Naive thymus-derived CD4-positive, alpha-beta T cell (primary cell): ENCODE measurements at regions of chr3 and their contacts with region 1.

Region 1: GRCh38 chr3:122679085-122679881 is 1.4 kb upstream of the PARP14 start:
- DNase-seq: peak; percentile 49 to 84 (median 79)
- ATAC-seq: peak; percentile 82
- H3K4me3 ChIP-seq: peak overlapping the region; percentile 87
- H3K4me3 Mint-ChIP-seq: peak overlapping the region; percentile 87 to 99 (median 94)
- H3K27ac ChIP-seq: peak overlapping the region; percentile 98
- H3K27ac Mint-ChIP-seq: peak overlapping the region; percentile 93 to 100 (median 98)
- H3K4me1 ChIP-seq: peaks cover 27 to 33% of the 10 kb centered on the region in 2 donors
- H3K4me1 Mint-ChIP-seq: peaks cover 40 to 57% (median 54%) of the 10 kb centered on the region in 7 donors
- H3K27me3 ChIP-seq: no peaks in the 10 kb centered on the region
- H3K27me3 Mint-ChIP-seq: no peaks in the 10 kb centered on the region

Region 2: DNA sequence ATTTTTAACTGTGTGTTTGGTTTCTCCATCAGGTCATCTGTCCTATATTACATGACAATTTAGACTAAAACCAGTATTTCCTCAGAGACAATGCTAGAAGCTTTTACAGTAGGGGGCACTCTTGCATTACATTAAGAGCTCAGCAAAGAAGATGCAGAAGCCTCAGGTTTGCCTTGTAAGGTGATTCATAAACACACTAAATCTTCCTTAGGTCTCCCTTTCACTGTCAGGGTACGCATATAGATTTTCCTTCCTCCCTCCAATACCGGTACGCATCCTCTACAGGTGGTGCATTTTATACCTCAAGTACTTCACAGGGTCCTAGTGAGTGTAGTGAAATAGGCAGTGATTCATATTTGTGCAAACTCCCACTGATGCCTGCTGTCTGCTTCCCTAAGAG is 577.6 kb before region 1 on chr3:
- CTCF ChIA-PET with region 1: no interaction called
- POLR2A ChIA-PET with region 1: no interaction called
- intact Hi-C with region 1: loop called (anchors 1 to 5 kb)
- DNase-seq: peak in 7 of 9 donors; percentile 19 to 66 (median 54)
- ATAC-seq: peak; percentile 79
- H3K4me3 ChIP-seq: no peak overlapping the region
- H3K4me3 Mint-ChIP-seq: peak overlapping the region in 1 of 10 donors; percentile 4
- H3K27ac ChIP-seq: no peak overlapping the region
- H3K27ac Mint-ChIP-seq: no peak overlapping the region
- H3K4me1 ChIP-seq: peaks cover 0 to 5% of the 10 kb centered on the region in 2 donors
- H3K4me1 Mint-ChIP-seq: peaks cover 0 to 37% (median 10%) of the 10 kb centered on the region in 7 donors
- H3K27me3 ChIP-seq: no peaks in the 10 kb centered on the region
- H3K27me3 Mint-ChIP-seq: no peaks in the 10 kb centered on the region

Region 3: DNA sequence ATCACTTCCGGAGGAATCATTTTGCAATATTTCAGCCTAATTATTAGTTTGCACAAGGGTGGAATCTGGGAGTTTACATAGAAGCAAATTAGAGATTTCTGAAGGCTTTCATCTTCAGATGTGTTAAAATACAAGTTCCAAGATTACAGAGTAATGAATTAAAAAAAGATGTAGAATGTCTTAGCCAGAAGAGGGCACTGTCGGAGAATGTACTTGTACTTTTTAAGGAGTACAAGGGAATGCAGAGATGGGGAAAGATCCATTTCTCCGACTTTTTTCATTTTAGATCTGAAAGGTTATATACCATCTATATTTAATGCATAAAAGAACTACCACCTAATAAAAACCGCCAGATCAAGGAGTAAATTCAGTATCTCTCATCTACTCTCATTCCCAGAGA is 220.3 kb before region 1 on chr3:
- CTCF ChIA-PET with region 1: interaction called, 3 read pairs
- POLR2A ChIA-PET with region 1: no interaction called
- intact Hi-C with region 1: loop called (anchors 1 kb)
- DNase-seq: no peak
- ATAC-seq: no peak
- H3K4me3 ChIP-seq: no peak overlapping the region
- H3K4me3 Mint-ChIP-seq: no peak overlapping the region
- H3K27ac ChIP-seq: no peak overlapping the region
- H3K27ac Mint-ChIP-seq: peak overlapping the region in 5 of 9 donors; percentile 6 to 60 (median 25)
- H3K4me1 ChIP-seq: no peaks in the 10 kb centered on the region
- H3K4me1 Mint-ChIP-seq: peaks cover 0 to 9% (median 0%) of the 10 kb centered on the region in 7 donors
- H3K27me3 ChIP-seq: no peaks in the 10 kb centered on the region
- H3K27me3 Mint-ChIP-seq: no peaks in the 10 kb centered on the region

Region 4: DNA sequence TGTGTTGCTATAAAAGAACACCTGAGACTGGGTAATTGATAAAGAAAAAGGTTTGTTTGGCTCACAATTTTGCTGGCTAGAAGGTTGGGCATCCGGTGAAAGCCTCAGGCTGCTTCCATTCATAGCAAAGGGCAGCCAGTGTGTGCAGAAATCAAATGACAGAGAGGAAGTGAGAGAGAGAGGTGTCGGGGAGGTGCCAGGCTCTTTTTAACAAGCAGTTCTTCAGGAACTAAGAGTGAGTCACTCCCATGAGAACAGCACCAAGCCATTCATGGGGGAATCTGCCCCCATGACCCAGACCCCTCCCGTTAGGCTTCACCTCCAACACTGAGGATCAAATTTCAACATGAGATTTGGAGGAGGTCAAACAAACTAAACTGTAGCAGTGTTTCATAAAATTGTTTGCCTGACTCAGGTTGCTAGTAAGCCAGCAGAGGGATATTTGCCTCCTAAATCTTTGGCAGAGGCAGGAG is 106.3 kb before region 1 on chr3:
- CTCF ChIA-PET with region 1: interaction called, 7 read pairs
- POLR2A ChIA-PET with region 1: interaction called, 84 read pairs
- intact Hi-C with region 1: loop called (anchors 1 kb)
- DNase-seq: no peak
- ATAC-seq: peak; percentile 73
- H3K4me3 ChIP-seq: no peak overlapping the region
- H3K4me3 Mint-ChIP-seq: peak overlapping the region in 5 of 10 donors; percentile 10 to 68 (median 40)
- H3K27ac ChIP-seq: no peak overlapping the region
- H3K27ac Mint-ChIP-seq: peak overlapping the region; percentile 29 to 84 (median 67)
- H3K4me1 ChIP-seq: peaks cover 23 to 24% of the 10 kb centered on the region in 2 donors
- H3K4me1 Mint-ChIP-seq: peaks cover 30 to 74% (median 70%) of the 10 kb centered on the region in 7 donors
- H3K27me3 ChIP-seq: no peaks in the 10 kb centered on the region
- H3K27me3 Mint-ChIP-seq: no peaks in the 10 kb centered on the region

Region 5: DNA sequence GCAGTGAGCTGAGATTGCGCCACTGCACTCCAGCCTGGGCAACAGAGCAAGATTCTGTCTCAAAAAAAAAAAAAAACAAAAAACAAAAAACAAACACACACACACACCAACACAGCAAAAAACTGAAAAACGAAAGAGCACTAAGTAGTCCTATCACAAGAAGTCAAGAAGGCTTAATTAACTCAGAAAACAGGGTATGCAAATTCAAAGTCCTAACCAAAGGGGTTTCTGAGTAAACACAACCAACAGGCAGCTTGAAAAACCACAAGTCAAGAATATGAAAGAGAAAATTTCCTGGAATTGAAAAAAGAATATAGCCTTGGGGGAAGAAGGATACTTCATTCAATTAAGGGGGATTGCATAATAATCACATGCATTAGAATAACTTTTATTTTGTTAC is 36.3 kb before region 1 on chr3:
- CTCF ChIA-PET with region 1: interaction called, 7 read pairs
- POLR2A ChIA-PET with region 1: interaction called, 14 read pairs
- intact Hi-C with region 1: loop called (anchors 1 kb)
- DNase-seq: no peak
- ATAC-seq: no peak
- H3K4me3 ChIP-seq: no peak overlapping the region
- H3K4me3 Mint-ChIP-seq: peak overlapping the region in 1 of 10 donors; percentile 68
- H3K27ac ChIP-seq: no peak overlapping the region
- H3K27ac Mint-ChIP-seq: peak overlapping the region in 2 of 9 donors; percentile 23 to 65
- H3K4me1 ChIP-seq: no peaks in the 10 kb centered on the region
- H3K4me1 Mint-ChIP-seq: peaks cover 2 to 47% (median 8%) of the 10 kb centered on the region in 7 donors
- H3K27me3 ChIP-seq: no peaks in the 10 kb centered on the region
- H3K27me3 Mint-ChIP-seq: peaks cover 0 to 14% (median 0%) of the 10 kb centered on the region in 5 donors

Region 6: GRCh38 chr3:123584988-123585937 is 906.0 kb after region 1 on chr3 and contains the start of gene HACD2:
- CTCF ChIA-PET with region 1: no interaction called
- POLR2A ChIA-PET with region 1: no interaction called
- intact Hi-C with region 1: loop called in 1 of 2 experiments (anchors 5 kb)
- DNase-seq: peak; percentile 87 to 96 (median 90)
- ATAC-seq: peak; percentile 96
- H3K4me3 ChIP-seq: peak within 1 kb of the TSS; percentile 98
- H3K4me3 Mint-ChIP-seq: peak within 1 kb of the TSS in 3 of 10 donors; percentile 87 to 90 (median 89)
- H3K27ac ChIP-seq: peak within 1 kb of the TSS; percentile 79
- H3K27ac Mint-ChIP-seq: peak within 1 kb of the TSS; percentile 44 to 93 (median 83)
- H3K4me1 ChIP-seq: peaks cover 8 to 13% of the 10 kb centered on the region in 2 donors
- H3K4me1 Mint-ChIP-seq: peaks cover 14 to 32% (median 30%) of the 10 kb centered on the region in 7 donors
- H3K27me3 ChIP-seq: no peaks in the 10 kb centered on the region
- H3K27me3 Mint-ChIP-seq: no peaks in the 10 kb centered on the region
- total RNA-seq, gene HACD2: 15.9 to 28.3 (median 24.0) TPM